Activated CD4-positive, alpha-beta memory T cell treated with anti-CD3 and anti-CD28 coated beads for 36 hours (primary cell): ENCODE measurements at regions of chr6 and their contacts with region 1.

Region 1: DNA sequence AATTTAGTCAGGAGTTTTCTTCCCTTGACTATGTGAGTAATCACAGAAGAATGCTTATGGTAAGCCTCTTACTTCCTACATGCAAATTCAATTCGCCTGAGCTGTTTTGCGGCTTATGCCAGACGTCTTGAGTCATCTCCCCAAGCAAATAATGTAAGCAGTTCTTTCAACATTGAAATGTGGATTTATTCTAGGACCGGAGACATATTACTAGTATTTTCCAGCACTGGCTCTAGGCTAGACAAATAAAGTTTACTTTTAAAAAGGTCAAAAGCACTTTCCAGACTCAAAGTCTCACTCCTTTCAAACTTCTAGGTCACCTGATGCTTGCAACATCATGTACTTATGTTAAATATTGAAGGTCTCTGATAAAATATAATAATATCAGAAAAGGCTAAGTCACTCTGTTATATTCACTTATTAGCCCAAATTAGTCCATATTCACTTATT is 38.1 kb upstream of the NOX3 start:
- DNase-seq: peak; percentile 62
- H3K4me3 Mint-ChIP-seq: no peak overlapping the region
- H3K27ac Mint-ChIP-seq: peak overlapping the region; percentile 34
- H3K4me1 Mint-ChIP-seq: peaks cover 33% of the 10 kb centered on the region
- H3K27me3 Mint-ChIP-seq: no peaks in the 10 kb centered on the region

Region 2: GRCh38 chr6:155426408-155426945 is 67.2 kb before region 1 on chr6:
- CTCF ChIA-PET with region 1: no interaction called
- POLR2A ChIA-PET with region 1: no interaction called
- intact Hi-C with region 1: no loop called
- DNase-seq: no peak
- H3K4me3 Mint-ChIP-seq: no peak overlapping the region
- H3K27ac Mint-ChIP-seq: no peak overlapping the region
- H3K4me1 Mint-ChIP-seq: peaks cover 14% of the 10 kb centered on the region
- H3K27me3 Mint-ChIP-seq: no peaks in the 10 kb centered on the region

Region 3: DNA sequence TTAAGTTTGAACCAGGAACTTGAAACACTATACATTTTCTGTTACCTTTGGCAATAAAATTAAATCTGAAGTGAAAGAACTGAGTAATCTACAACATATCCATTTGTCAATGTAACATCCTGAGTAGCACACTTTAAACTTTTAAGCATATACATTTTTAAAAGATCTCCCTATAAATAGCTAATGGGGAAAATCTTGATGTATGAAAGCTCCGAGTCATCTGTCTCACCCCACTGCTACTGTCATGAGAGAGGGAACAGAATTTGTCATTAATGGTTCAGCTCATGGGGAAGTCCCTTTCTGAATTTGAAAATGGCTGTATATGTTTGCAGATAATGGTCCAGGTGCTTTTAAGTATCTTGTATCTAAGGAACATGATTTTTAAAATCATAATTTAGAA is 17.2 kb after region 1 on chr6:
- CTCF ChIA-PET with region 1: interaction called, 8 read pairs
- POLR2A ChIA-PET with region 1: no interaction called
- intact Hi-C with region 1: loop called (anchors 1 kb)
- DNase-seq: no peak
- H3K4me3 Mint-ChIP-seq: no peak overlapping the region
- H3K27ac Mint-ChIP-seq: peak overlapping the region; percentile 60
- H3K4me1 Mint-ChIP-seq: peaks cover 19% of the 10 kb centered on the region
- H3K27me3 Mint-ChIP-seq: peaks cover 5% of the 10 kb centered on the region

Region 4: GRCh38 chr6:155543166-155543847 is 49.6 kb after region 1 on chr6:
- CTCF ChIA-PET with region 1: no interaction called
- POLR2A ChIA-PET with region 1: no interaction called
- intact Hi-C with region 1: no loop called
- DNase-seq: no peak
- H3K4me3 Mint-ChIP-seq: no peak overlapping the region
- H3K27ac Mint-ChIP-seq: no peak overlapping the region
- H3K4me1 Mint-ChIP-seq: no peaks in the 10 kb centered on the region
- H3K27me3 Mint-ChIP-seq: peaks cover 7% of the 10 kb centered on the region